MCF 10A (cell line): ENCODE measurements at regions of chr17 and their contacts with region 1.

Region 1: GRCh38 chr17:47315451-47316266 is 8.1 kb upstream of the EFCAB13 start:
- DNase-seq: peak; percentile 83
- H3K4me3 Mint-ChIP-seq: no peak overlapping the region
- H3K27ac Mint-ChIP-seq: peak overlapping the region; percentile 23
- H3K4me1 Mint-ChIP-seq: peaks cover 4% of the 10 kb centered on the region
- H3K27me3 Mint-ChIP-seq: no peaks in the 10 kb centered on the region
- CTCF ChIP-seq: peak; percentile 89

Region 2: GRCh38 chr17:47188876-47189731 is 126.6 kb before region 1 on chr17 and contains the start of gene CDC27:
- CTCF ChIA-PET with region 1: interaction called, 3 read pairs
- POLR2A ChIA-PET with region 1: interaction called, 10 read pairs
- intact Hi-C with region 1: loop called (anchors 2 kb)
- DNase-seq: peak; percentile 99
- H3K4me3 Mint-ChIP-seq: peak within 1 kb of the TSS; percentile 87
- H3K27ac Mint-ChIP-seq: peak within 1 kb of the TSS; percentile 97
- H3K4me1 Mint-ChIP-seq: peaks cover 20% of the 10 kb centered on the region
- H3K27me3 Mint-ChIP-seq: no peaks in the 10 kb centered on the region
- CTCF ChIP-seq: no peak
- total RNA-seq, gene CDC27: 141 and 143 TPM in 2 replicates

Region 3: DNA sequence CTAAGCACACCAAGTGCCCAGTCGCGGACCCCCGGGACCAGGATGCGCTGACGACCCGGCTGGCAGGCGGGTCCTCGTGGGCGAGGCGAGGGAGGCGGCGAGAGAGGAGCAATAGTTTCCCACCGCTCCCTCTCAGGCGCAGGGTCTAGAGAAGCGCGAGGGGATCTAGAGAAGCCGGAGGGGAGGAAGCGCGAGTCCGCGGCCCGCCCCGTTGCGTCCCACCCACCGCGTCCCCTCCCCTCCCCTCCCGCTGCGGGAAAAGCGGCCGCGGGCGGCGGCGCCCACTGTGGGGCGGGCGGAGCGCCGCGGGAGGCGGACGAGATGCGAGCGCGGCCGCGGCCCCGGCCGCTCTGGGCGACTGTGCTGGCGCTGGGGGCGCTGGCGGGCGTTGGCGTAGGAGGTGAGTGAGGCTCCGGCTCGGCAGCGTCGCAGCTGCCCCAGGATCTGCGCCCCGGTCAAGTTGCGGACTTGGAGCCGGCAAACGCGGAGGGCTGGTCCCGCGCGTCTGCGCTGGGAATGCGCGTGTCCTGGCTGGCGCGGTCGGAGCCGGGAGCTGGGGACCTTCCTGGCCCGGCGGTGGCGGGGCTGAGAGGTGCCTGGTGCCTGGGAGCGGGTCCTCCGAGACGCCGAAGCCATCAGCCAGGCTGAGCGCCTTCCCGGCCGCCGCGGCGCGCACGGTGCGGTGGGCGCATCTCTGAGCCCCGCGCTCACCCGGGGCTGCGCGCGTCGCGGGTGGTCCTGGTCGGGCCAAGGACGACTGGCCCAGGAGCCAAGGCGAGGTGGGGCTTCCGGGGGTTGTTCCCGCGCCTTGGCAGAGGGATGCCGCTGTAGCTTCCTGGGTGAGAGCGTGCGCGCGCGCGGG is 61.9 kb before region 1 on chr17 and contains the start of gene ITGB3:
- CTCF ChIA-PET with region 1: interaction called, 10 read pairs
- POLR2A ChIA-PET with region 1: interaction called, 4 read pairs
- intact Hi-C with region 1: loop called (anchors 1 kb)
- DNase-seq: peak; percentile 60
- H3K4me3 Mint-ChIP-seq: peak within 1 kb of the TSS; percentile 70
- H3K27ac Mint-ChIP-seq: no peak within 1 kb of the TSS
- H3K4me1 Mint-ChIP-seq: peaks cover 32% of the 10 kb centered on the region
- H3K27me3 Mint-ChIP-seq: no peaks in the 10 kb centered on the region
- CTCF ChIP-seq: no peak
- total RNA-seq, gene ITGB3: 0.98 and 1.1 TPM in 2 replicates

Region 4: DNA sequence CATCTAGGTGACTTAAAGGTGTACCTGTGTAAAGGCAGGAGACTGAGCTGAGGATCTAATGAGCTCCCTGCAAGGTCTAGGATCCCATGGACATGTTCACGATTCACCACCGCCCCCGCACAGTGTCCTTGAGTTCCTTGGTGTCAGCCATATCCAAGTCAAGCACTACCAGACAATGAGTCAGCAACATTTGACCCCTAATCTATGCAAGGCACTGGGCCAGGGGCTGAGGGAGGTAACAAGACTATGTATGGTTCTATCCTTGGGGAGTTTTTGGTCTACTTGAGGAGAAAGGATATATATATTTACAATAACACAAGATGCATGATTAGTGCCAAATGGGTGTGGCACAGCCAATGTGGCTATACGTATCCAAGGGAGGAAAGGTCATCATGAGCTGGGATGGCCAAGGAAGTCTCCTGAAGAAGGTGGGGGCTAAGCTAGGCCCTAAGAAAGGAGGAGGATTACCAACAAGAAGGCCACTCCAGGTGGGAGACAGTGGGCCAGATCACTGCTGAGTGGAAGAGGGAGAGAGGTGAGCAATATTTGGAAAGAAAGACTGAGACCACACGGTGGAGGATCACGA is 27.0 kb before region 1 on chr17:
- CTCF ChIA-PET with region 1: interaction called, 12 read pairs
- POLR2A ChIA-PET with region 1: no interaction called
- intact Hi-C with region 1: no loop called
- DNase-seq: peak; percentile 57
- H3K4me3 Mint-ChIP-seq: no peak overlapping the region
- H3K27ac Mint-ChIP-seq: no peak overlapping the region
- H3K4me1 Mint-ChIP-seq: no peaks in the 10 kb centered on the region
- H3K27me3 Mint-ChIP-seq: no peaks in the 10 kb centered on the region
- CTCF ChIP-seq: no peak

Region 5: DNA sequence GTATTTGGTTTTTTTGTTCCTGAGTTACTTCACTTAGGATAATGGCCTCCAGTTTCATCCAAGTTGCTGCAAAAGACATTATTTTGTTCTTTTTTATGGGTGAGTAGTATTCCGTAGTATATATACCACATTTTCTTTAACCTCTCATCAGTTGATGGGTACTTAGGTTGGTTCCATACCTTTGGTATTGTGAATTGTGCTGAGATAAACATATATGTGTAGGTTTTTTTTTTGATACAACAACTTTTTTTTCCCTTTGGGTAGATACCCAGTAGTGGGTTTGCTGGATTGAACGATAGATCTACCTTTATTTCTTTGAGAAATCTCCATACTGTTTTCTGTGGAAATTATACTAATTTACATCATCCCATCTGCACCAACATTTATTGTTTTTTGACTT is 14.9 kb after region 1 on chr17:
- CTCF ChIA-PET with region 1: no interaction called
- POLR2A ChIA-PET with region 1: no interaction called
- intact Hi-C with region 1: no loop called
- DNase-seq: no peak
- H3K4me3 Mint-ChIP-seq: no peak overlapping the region
- H3K27ac Mint-ChIP-seq: no peak overlapping the region
- H3K4me1 Mint-ChIP-seq: no peaks in the 10 kb centered on the region
- H3K27me3 Mint-ChIP-seq: peaks cover 18% of the 10 kb centered on the region
- CTCF ChIP-seq: no peak